ENCODE measurements at regions of chr1 and their contacts with region 1.

Region 1: GRCh38 chr1:244599937-244600350 is 53.0 kb upstream of the DESI2 start:
- DNase-seq: peak; percentile 79
- H3K4me3 Mint-ChIP-seq: peak overlapping the region; percentile 64
- H3K27ac Mint-ChIP-seq: peak overlapping the region; percentile 87
- H3K4me1 Mint-ChIP-seq: peaks cover 21% of the 10 kb centered on the region
- H3K27me3 Mint-ChIP-seq: peaks cover 2% of the 10 kb centered on the region

Region 2: DNA sequence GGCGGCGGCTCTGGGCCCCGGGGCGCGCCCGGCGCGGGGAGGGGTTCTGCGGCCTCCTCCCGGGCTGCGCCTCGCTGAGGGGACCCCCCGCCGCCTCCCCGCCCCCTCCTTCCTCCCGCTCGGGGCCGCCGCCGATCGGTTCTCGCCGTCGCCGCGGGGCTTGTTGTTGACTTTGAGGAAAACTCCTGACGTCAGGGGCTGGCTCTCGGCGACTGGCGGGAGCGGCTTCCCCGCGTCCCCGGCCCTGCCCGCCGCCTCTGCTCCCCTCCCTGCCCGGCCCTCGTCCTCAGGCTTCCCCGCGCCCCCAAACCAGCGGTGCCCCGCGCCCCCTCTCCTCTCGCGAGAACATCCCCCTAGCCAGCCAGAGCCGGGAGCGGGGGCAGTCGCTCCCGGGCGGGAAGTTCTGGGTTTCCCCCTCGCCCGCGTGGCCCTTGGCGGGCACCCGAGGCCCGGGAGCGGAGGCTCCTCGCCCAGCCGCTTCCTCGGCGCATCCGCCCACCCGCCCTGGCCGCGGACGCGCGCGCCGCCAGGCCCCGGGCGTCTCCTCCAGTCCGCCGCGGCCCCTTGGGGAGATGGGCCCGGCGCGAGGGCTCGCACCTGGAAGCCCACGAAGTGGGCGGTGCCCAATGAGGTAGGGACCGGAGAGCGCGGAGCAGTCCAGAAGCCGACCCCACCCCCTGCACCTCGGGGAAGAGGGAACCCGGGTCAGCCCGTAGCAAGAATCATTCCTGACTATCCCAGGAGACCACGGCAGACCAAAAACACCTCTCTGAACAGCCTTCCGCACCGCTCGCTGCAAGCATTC is 749.3 kb before region 1 on chr1:
- CTCF ChIA-PET with region 1: no interaction called
- intact Hi-C with region 1: loop called (anchors 10 kb)
- DNase-seq: peak; percentile 86
- H3K4me3 Mint-ChIP-seq: peak overlapping the region; percentile 80
- H3K27ac Mint-ChIP-seq: peak overlapping the region; percentile 81
- H3K4me1 Mint-ChIP-seq: peaks cover 30% of the 10 kb centered on the region
- H3K27me3 Mint-ChIP-seq: peaks cover 7% of the 10 kb centered on the region

Region 3: GRCh38 chr1:244576259-244576892 is 23.6 kb before region 1 on chr1:
- CTCF ChIA-PET with region 1: no interaction called
- intact Hi-C with region 1: no loop called
- DNase-seq: no peak
- H3K4me3 Mint-ChIP-seq: no peak overlapping the region
- H3K27ac Mint-ChIP-seq: no peak overlapping the region
- H3K4me1 Mint-ChIP-seq: no peaks in the 10 kb centered on the region
- H3K27me3 Mint-ChIP-seq: no peaks in the 10 kb centered on the region

Region 4: DNA sequence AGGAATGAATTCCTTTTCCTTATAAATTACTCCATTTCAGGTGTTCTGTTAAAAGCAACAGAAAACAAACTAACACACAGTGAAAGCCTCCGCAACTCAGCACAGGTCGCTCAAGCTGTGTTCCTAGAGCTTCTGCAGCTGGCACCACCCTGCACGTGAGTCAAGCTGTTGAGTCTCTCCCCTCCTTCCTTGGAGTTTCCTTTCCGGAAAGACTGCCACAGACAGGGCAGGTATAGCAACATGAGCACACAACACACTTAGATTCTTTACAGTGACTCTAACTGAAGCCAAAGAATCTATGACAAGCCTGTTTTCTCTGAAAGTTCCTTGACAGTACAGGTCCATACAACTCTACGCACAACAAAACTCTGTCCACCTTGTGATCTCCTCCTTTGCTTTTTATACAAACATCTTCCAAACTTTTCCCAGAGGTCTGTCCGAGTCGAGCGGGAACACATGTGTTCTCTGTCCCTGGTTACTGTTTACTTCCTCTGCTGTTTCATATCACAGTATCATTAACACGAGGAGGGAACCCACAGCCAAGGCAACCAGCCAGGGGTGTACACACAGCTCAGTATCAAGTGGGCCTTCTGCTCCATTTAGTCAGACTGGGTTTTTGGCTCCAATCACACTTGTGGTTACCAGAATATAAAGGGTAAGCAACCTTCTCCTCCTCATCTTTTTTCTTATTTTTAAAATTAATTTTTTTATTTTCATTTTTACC is 14.3 kb after region 1 on chr1:
- CTCF ChIA-PET with region 1: interaction called, 17 read pairs
- intact Hi-C with region 1: no loop called
- DNase-seq: no peak
- H3K4me3 Mint-ChIP-seq: no peak overlapping the region
- H3K27ac Mint-ChIP-seq: no peak overlapping the region
- H3K4me1 Mint-ChIP-seq: no peaks in the 10 kb centered on the region
- H3K27me3 Mint-ChIP-seq: no peaks in the 10 kb centered on the region

Region 5: GRCh38 chr1:244652699-244653466 is 52.9 kb after region 1 on chr1 and contains the start of gene DESI2:
- CTCF ChIA-PET with region 1: interaction called, 6 read pairs
- intact Hi-C with region 1: loop called (anchors 1 kb)
- DNase-seq: peak; percentile 99
- H3K4me3 Mint-ChIP-seq: peak within 1 kb of the TSS; percentile 82
- H3K27ac Mint-ChIP-seq: peak within 1 kb of the TSS; percentile 88
- H3K4me1 Mint-ChIP-seq: peaks cover 18% of the 10 kb centered on the region
- H3K27me3 Mint-ChIP-seq: no peaks in the 10 kb centered on the region
- total RNA-seq, gene DESI2: 31.7 to 32.5 TPM

Region 6: DNA sequence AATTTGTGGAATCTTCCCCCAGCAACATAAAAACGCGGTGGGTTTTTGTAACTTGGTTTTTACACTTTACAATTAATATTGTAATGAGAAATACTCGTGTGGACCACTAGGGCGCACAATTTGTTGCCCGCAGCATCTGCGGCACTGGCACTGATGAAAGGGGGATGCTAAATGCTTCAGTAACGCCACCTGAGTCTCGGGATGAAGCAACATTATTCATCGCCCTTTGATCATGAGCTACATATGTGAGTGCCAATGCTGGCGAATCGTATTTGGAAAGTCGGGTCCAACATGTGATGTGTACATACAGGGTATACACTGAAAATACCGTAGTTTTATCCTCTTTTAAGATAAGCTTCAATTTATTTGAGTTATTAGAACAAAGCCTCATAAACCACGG is 201.3 kb after region 1 on chr1:
- CTCF ChIA-PET with region 1: interaction called, 134 read pairs
- intact Hi-C with region 1: loop called (anchors 1 kb)
- DNase-seq: peak; percentile 74
- H3K4me3 Mint-ChIP-seq: no peak overlapping the region
- H3K27ac Mint-ChIP-seq: no peak overlapping the region
- H3K4me1 Mint-ChIP-seq: peaks cover 2% of the 10 kb centered on the region
- H3K27me3 Mint-ChIP-seq: no peaks in the 10 kb centered on the region

Region 7: DNA sequence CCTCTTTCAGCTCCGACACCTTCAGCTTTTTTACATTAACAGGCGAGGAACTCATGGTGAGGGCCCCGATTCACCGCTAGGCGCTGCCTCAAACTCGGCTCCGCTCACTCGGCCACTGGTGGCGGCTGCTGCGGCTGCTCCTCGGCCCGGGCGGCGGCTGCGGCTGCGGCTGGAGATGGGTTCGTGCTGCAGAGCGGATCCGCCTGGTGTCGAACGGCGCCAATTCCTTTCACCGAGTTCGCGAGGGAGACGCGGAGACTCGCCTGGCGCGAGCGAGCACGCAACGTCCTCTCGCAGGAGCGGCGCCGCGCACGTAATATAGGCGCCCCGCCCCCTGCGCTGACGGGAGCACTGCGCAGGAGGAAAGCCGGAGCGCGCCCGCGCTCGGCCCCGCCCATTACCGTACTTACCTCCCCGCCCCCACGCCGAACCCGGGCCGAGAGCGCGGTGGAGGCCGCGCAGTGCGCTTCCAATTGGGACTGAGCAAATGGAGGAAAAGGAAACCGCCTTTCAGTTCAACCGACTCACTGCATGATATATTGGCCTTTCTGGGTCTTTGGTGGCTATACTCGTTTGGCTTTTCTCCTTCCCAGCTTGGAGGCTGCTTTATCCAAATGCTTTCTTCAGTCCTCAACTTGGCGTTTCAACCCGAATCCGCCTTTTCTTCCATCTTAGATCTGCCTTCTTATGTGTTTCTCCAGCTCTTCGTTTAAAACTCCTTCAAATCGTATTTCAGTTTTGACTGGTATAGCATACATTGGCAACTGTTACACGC is 264.5 kb after region 1 on chr1 and contains the start of gene HNRNPU:
- CTCF ChIA-PET with region 1: interaction called, 6 read pairs
- intact Hi-C with region 1: loop called (anchors 1 kb)
- DNase-seq: peak; percentile 95
- H3K4me3 Mint-ChIP-seq: peak within 1 kb of the TSS; percentile 90
- H3K27ac Mint-ChIP-seq: peak within 1 kb of the TSS; percentile 99
- H3K4me1 Mint-ChIP-seq: peaks cover 31% of the 10 kb centered on the region
- H3K27me3 Mint-ChIP-seq: no peaks in the 10 kb centered on the region
- total RNA-seq, gene HNRNPU: 331 to 338 TPM

Region 8: GRCh38 chr1:245045087-245045881 is 445.3 kb after region 1 on chr1:
- CTCF ChIA-PET with region 1: interaction called, 31 read pairs
- intact Hi-C with region 1: loop called (anchors 1 kb)
- DNase-seq: no peak
- H3K4me3 Mint-ChIP-seq: no peak overlapping the region
- H3K27ac Mint-ChIP-seq: no peak overlapping the region
- H3K4me1 Mint-ChIP-seq: no peaks in the 10 kb centered on the region
- H3K27me3 Mint-ChIP-seq: no peaks in the 10 kb centered on the region

Measured in activated naive CD4-positive, alpha-beta T cell treated with anti-CD3 and anti-CD28 coated beads for 36 hours (primary cell).